ENCODE measurements at regions of chr20 and their contacts with region 1.

Region 1: GRCh38 chr20:44747166-44748004 is 1.7 kb downstream of the KCNK15 start:
- DNase-seq: peak; percentile 29 to 92
- H3K4me3 ChIP-seq: peak overlapping the region; percentile 62 to 86
- H3K27ac ChIP-seq: peak overlapping the region; percentile 92 to 94
- H3K4me1 ChIP-seq: peaks cover 7 to 21% of the 10 kb centered on the region in 2 donors
- H3K27me3 ChIP-seq: no peaks in the 10 kb centered on the region
- CTCF ChIP-seq: peak; percentile 52 to 82 (median 65)

Region 2: GRCh38 chr20:44601801-44602204 is 145.6 kb before region 1 on chr20:
- intact Hi-C with region 1: loop called (anchors 5 kb)
- DNase-seq: peak in 1 of 2 donors; percentile 92
- H3K4me3 ChIP-seq: no peak overlapping the region
- H3K27ac ChIP-seq: peak overlapping the region; percentile 97
- H3K4me1 ChIP-seq: peaks cover 37 to 62% of the 10 kb centered on the region in 2 donors
- H3K27me3 ChIP-seq: no peaks in the 10 kb centered on the region
- CTCF ChIP-seq: no peak

Region 3: DNA sequence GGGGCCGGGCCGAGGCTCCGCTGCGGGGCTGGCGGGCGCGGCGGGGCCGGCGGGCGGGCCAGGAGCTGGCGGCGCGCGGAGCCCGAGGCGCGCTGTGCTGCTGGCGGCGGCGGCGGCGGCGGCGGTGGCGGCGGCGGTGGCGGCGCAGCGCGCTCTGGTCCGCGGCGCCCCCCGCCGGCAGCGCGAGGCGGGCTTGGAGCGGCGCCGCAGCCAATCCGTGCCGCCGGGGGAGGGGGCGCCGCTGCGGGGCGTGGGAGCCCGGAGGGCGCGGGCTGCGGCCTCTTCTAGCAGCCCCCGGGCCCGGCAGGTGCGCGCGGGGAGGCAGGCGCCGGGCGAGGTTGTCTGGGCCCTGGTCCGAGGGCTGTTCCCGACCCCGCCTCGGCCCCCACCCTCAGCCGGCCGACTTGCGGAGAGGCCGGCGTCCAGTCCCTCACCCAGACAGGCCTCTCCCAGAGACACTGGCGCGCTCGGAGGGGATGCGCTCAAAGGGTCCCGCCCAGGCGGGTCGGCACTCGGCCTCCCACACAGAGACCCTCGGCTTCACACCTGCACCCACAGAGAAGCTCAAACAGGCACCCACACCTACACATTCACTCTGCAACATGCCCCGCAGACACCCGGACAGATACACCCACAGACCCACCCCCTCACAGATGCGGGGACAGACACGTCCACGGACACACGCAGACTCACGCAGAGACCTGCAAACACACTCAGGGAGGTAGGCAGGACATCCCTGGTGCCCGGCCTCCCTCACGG is 63.2 kb after region 1 on chr20 and contains the start of gene RIMS4:
- intact Hi-C with region 1: loop called (anchors 2 kb)
- DNase-seq: peak in 1 of 2 donors; percentile 42
- H3K4me3 ChIP-seq: peak within 1 kb of the TSS; percentile 52 to 66
- H3K27ac ChIP-seq: no peak within 1 kb of the TSS
- H3K4me1 ChIP-seq: peaks cover 7% of the 10 kb centered on the region in 2 donors
- H3K27me3 ChIP-seq: peaks cover 11% of the 10 kb centered on the region
- CTCF ChIP-seq: no peak
- total RNA-seq, gene RIMS4: 4.0 TPM

Region 4: DNA sequence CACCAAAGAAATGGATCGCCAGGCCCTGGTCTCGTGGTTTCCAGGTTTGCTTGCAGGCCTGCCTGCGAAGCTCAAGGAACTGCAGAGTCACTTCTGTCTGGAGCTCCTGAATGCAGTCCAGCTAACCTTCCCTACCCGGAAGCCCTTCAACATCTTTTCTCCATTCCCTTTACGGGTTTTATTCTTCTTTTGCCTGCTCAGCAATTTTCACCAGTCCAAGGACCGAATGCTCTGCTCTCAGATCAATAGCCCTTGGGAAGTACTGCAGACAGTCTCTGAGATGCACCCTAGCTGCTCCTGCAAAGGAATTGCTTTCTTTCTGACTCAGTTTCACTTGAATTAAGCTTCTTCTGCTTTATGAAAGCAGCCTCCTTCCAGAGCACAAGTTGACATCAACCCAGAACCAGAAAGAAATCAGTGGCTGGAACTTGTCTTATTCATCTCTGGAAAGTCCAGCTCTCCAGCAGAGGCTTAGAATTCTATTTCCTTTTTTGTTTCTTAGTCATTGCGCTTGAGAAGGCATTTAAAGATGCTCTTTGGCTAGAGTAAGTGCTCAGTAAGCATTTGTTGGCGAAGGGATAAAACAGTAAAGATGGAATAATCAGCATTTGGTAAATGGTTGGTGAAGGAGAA is 119.4 kb after region 1 on chr20:
- intact Hi-C with region 1: loop called (anchors 1 kb)
- DNase-seq: no peak
- H3K4me3 ChIP-seq: peak overlapping the region in 1 of 2 donors; percentile 46
- H3K27ac ChIP-seq: peak overlapping the region in 1 of 2 donors; percentile 9
- H3K4me1 ChIP-seq: peaks cover 9 to 31% of the 10 kb centered on the region in 2 donors
- H3K27me3 ChIP-seq: no peaks in the 10 kb centered on the region
- CTCF ChIP-seq: no peak

Region 5: DNA sequence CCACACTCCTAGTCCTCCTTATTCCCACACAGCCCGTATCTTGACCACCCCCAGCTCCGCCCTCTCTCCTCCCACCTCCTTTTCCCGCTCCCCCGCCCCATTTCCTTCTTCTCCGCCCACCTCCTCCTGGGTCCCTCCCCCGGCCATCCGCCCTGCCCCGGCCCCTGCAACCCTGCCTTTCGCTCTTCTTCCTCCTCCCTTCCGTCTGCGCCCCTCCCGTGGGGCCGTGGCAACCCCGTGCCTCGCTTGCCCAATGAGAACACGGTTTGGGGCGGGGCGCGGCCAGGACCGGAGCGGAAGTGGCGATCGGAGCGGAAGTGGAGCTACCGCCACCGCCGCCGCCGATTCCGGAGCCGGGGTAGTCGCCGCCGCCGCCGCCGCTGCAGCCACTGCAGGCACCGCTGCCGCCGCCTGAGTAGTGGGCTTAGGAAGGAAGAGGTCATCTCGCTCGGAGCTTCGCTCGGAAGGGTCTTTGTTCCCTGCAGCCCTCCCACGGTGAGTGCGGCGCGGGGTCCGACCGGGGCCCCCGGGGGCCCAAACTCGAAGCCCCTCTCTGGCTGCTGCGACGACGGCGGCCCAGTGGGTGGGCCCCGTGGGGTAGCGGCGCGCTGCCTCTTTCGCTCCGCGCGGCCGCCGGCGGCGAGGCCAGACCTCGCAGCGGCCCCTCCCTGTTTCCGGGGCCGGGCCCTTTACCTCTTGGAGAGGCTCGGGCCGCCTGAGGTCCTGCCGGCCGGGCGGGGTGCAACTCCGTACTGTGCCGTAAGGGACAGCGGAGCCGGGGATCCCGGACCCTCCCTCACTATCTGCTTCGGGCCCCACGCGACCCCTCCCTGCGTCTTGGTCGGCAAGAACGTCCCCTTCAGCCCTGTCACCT is 138.2 kb after region 1 on chr20 and contains the start of gene YWHAB:
- intact Hi-C with region 1: loop called (anchors 1 kb)
- DNase-seq: peak; percentile 96 to 99
- H3K4me3 ChIP-seq: peak within 1 kb of the TSS; percentile 78 to 91
- H3K27ac ChIP-seq: peak within 1 kb of the TSS; percentile 96 to 97
- H3K4me1 ChIP-seq: peaks cover 0 to 28% of the 10 kb centered on the region in 2 donors
- H3K27me3 ChIP-seq: no peaks in the 10 kb centered on the region
- CTCF ChIP-seq: no peak
- total RNA-seq, gene YWHAB: 50.4 TPM

Region 6: DNA sequence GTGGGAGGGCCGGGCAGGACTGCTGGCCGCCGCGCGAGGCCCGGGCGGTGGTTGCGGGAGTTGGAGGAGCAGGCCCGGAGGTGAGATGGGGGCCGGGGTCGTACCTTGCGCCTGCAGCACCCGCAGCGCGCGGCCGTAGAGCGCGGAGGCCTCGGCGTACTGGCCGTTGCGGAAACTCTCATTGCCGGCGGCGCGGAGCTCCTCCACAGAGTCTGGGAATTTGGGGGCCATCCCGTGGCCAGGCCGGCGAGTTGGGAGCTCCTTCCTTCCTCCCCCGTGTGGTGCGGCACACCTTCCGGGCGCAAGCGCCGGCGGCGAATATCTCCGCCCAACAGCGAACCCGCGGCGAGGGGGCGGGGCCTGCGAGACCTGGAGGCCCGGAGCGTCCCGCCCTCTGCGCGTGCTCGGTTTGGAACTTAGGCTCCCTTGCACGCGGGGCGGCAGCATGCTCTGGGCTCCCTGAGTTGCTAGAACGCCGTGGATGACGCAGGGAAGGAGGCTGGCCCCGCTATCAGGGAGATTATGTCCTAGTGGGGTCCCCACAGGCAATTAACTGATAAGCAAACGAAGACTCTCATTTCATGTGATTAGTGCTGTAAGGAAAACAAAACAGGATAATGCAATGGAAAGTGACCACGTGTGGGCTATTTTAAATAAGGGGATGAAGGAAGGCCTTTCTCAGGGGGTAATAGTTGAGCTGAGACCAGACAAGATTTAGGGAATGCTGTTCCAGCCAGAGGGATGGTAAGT is 212.9 kb after region 1 on chr20 and contains the start of gene TOMM34:
- intact Hi-C with region 1: loop called (anchors 5 kb)
- DNase-seq: peak; percentile 80 to 97
- H3K4me3 ChIP-seq: peak within 1 kb of the TSS; percentile 79 to 89
- H3K27ac ChIP-seq: peak within 1 kb of the TSS; percentile 79 to 87
- H3K4me1 ChIP-seq: peaks cover 0 to 11% of the 10 kb centered on the region in 2 donors
- H3K27me3 ChIP-seq: no peaks in the 10 kb centered on the region
- CTCF ChIP-seq: peak in 1 of 3 experiments; percentile 8
- total RNA-seq, gene TOMM34: 11.1 TPM

Region 7: GRCh38 chr20:45052698-45053429 is 305.5 kb after region 1 on chr20:
- intact Hi-C with region 1: no loop called
- DNase-seq: no peak
- H3K4me3 ChIP-seq: no peak overlapping the region
- H3K27ac ChIP-seq: peak overlapping the region; percentile 23 to 29
- H3K4me1 ChIP-seq: peaks cover 0 to 5% of the 10 kb centered on the region in 2 donors
- H3K27me3 ChIP-seq: no peaks in the 10 kb centered on the region
- CTCF ChIP-seq: no peak